Thyroid gland (tissue), 4 donors: ENCODE measurements at regions of chr5 and their contacts with region 1.

Region 1: GRCh38 chr5:14644623-14645237 is 19.8 kb upstream of the OTULIN start:
- DNase-seq: no peak
- H3K4me3 ChIP-seq: no peak overlapping the region
- H3K27ac ChIP-seq: no peak overlapping the region
- H3K4me1 ChIP-seq: no peaks in the 10 kb centered on the region
- H3K27me3 ChIP-seq: no peaks in the 10 kb centered on the region
- CTCF ChIP-seq: no peak
- POLR2A ChIP-seq: no peak

Region 2: DNA sequence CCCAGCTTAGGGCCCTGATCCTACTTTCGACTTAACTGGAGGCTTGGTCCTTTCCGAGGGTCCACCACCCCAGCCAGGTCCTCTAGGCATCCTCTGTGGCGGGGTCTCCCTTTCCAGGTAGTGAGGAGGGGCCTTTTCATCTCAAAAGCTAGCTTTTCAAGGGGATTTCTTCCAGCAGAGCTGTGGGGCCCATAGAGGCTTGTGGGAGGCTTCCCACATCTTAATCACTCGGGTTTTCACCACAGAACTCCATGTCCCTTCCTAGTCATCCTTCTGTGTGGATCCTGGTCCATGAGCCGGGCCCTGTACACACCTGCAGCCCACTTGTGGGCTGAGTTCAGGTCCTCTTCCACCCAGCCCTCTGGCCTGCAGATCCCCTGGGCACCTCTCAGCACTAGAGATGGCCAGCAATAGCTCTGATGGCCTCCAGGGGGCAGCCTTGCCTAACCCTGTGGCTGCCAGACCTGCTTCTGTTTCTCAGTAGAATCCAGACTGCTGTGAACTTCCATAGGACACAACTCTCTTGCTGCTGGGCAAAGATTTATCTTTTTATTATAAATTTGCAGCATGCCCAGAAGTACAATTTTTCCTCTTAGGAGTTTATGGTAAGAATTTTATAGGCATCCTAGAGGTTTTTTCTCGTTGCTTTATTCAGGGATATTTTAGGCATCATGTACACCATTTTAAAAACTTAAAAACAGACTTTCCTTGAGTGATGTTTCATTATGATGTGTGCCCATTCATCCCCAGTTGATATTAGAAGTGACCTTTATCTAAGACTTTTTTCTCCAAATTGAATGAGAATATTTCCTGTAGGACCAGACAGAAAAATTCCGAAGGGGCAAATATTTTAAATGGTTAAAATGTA is 292.7 kb before region 1 on chr5:
- intact Hi-C with region 1: loop called (anchors 10 kb)
- DNase-seq: peak; percentile 54 to 66
- H3K4me3 ChIP-seq: no peak overlapping the region
- H3K27ac ChIP-seq: no peak overlapping the region
- H3K4me1 ChIP-seq: no peaks in the 10 kb centered on the region
- H3K27me3 ChIP-seq: no peaks in the 10 kb centered on the region
- CTCF ChIP-seq: peak; percentile 72 to 95 (median 82)
- POLR2A ChIP-seq: no peak

Region 3: DNA sequence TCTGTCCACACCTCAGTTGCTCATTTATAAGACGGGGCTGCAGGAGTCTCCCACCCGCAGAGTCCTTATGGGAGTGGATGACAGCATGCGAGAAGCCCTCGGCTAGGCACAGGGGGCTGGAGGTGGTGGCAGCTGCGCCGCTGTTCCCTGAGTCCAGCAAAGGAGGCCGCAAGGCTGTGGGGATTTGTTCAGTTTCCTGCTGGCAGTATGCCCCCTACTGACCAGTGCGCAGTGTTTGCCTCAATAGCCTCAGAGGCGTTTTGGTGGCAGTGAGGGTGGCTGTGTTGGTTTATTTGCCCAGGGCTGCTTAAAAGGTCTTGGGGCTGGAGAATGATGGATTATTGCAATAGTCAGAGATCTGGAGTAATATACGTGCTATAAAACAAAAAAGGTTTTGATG is 239.5 kb before region 1 on chr5:
- intact Hi-C with region 1: loop called (anchors 10 kb)
- DNase-seq: no peak
- H3K4me3 ChIP-seq: no peak overlapping the region
- H3K27ac ChIP-seq: no peak overlapping the region
- H3K4me1 ChIP-seq: no peaks in the 10 kb centered on the region
- H3K27me3 ChIP-seq: no peaks in the 10 kb centered on the region
- CTCF ChIP-seq: no peak
- POLR2A ChIP-seq: no peak

Region 4: GRCh38 chr5:14521748-14522147 is 123.0 kb before region 1 on chr5:
- intact Hi-C with region 1: no loop called
- DNase-seq: no peak
- H3K4me3 ChIP-seq: no peak overlapping the region
- H3K27ac ChIP-seq: no peak overlapping the region
- H3K4me1 ChIP-seq: no peaks in the 10 kb centered on the region
- H3K27me3 ChIP-seq: no peaks in the 10 kb centered on the region
- CTCF ChIP-seq: no peak
- POLR2A ChIP-seq: no peak